Activated CD8-positive, alpha-beta T cell treated with anti-CD3 and anti-CD28 coated beads, Interleukin-2, amount 10 ng/mL, durations not matched to agents 7 days and 5 days (primary cell): ENCODE measurements at regions of chr12 and their contacts with region 1.

Region 1: GRCh38 chr12:116172224-116172849 is 105.2 kb downstream of the MED13L start:
- DNase-seq: peak; percentile 66
- ATAC-seq: peak; percentile 96
- H3K4me3 Mint-ChIP-seq: peak overlapping the region; percentile 78
- H3K27ac Mint-ChIP-seq: peak overlapping the region; percentile 90
- H3K4me1 Mint-ChIP-seq: peaks cover 29% of the 10 kb centered on the region
- H3K27me3 Mint-ChIP-seq: no peaks in the 10 kb centered on the region

Region 2: DNA sequence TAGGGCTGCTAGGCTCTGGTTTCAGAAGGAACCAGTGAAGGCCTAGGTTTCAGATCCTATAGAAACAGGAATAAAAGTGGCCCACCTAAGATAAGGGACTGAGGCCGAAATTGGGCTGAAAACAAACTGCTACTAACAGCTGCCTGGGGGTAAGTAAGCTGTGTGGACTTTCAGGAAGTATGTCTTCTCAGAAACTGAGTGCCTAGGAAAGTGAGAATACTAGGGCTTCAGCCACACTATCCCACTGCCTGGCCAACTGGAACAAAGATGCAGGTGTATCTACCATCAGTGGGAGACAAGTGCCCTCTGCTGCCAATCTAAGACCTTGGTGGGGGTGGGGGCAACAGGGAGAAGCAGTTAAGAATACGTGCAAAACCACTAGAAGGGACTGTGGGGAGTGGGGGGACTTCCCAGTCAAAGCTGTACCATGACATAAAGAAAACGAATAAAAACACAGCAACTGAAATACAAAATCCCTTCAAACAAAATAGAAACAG is 22.6 kb after region 1 on chr12:
- CTCF ChIA-PET with region 1: interaction called, 14 read pairs
- POLR2A ChIA-PET with region 1: interaction called, 4 read pairs
- DNase-seq: peak; percentile 54
- ATAC-seq: peak; percentile 85
- H3K4me3 Mint-ChIP-seq: no peak overlapping the region
- H3K27ac Mint-ChIP-seq: peak overlapping the region; percentile 39
- H3K4me1 Mint-ChIP-seq: peaks cover 22% of the 10 kb centered on the region
- H3K27me3 Mint-ChIP-seq: no peaks in the 10 kb centered on the region

Region 3: GRCh38 chr12:116308647-116309046 is 136.3 kb after region 1 on chr12:
- CTCF ChIA-PET with region 1: no interaction called
- POLR2A ChIA-PET with region 1: no interaction called
- DNase-seq: no peak
- ATAC-seq: no peak
- H3K4me3 Mint-ChIP-seq: no peak overlapping the region
- H3K27ac Mint-ChIP-seq: no peak overlapping the region
- H3K4me1 Mint-ChIP-seq: no peaks in the 10 kb centered on the region
- H3K27me3 Mint-ChIP-seq: peaks cover 2% of the 10 kb centered on the region